Right lobe of liver (tissue), 6 donors: ENCODE measurements at regions of chr12 and their contacts with region 1.

Region 1: DNA sequence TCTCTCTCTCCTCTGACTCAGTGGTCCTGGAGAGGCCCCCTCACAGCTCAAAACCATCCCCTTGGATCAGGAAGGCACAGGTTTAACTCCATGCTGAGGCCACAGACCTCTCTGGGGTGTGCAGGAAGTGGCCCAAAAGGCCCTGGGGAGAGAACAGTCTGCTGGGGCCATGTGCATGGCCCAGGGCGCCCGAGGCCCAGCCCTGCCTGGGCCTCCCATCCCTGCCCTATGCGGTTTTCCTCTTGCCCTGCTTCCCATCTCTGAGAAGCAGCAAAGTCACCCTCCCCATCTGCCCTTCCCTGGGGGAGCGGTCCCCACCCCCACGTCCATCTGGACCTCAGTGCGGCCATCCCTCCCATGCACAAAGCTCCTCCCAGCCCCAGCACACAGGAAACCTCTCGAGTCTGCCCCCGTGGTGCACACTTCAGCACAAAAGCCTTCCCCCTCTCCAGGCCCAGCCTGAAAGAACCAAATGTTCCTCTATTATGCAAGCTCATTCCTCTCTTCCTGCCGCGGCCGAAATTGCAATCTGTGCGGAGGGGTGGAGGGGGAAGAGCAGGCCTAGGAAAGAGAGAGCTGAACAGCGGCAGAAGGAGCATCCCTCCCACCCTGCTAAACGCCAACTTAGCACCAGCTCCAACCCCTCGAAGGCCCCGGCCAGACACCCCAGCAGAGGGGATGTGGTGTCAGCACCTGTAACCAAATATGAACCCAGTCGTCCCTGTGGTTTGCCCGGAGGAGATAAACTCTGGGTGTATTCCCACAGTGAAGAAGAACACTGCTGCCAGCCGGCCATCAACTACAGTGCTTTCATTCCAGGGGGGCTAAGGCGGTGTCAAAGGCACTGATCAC is 108.5 kb downstream of the SCARB1 start:
- DNase-seq: peak; percentile 74 to 86 (median 81)
- ATAC-seq: peak; percentile 67 to 86 (median 84)
- H3K4me3 ChIP-seq: no peak overlapping the region
- H3K27ac ChIP-seq: peak overlapping the region; percentile 54 to 73 (median 58)
- H3K4me1 ChIP-seq: peaks cover 0 to 30% (median 16%) of the 10 kb centered on the region in 4 donors
- H3K27me3 ChIP-seq: no peaks in the 10 kb centered on the region
- CTCF ChIP-seq: no peak
- POLR2A ChIP-seq: peak; percentile 48

Region 2: GRCh38 chr12:124379938-124380754 is 375.0 kb before region 1 on chr12:
- intact Hi-C with region 1: loop called in 1 of 2 experiments (anchors 10 kb)
- DNase-seq: peak in 1 of 3 donors; percentile 46
- ATAC-seq: peak; percentile 36 to 49 (median 43)
- H3K4me3 ChIP-seq: no peak overlapping the region
- H3K27ac ChIP-seq: peak overlapping the region; percentile 36 to 77 (median 48)
- H3K4me1 ChIP-seq: peaks cover 0 to 23% (median 14%) of the 10 kb centered on the region in 4 donors
- H3K27me3 ChIP-seq: no peaks in the 10 kb centered on the region
- CTCF ChIP-seq: peak; percentile 20 to 25 (median 21)
- POLR2A ChIP-seq: no peak

Region 3: GRCh38 chr12:124795081-124795948 is 40.1 kb after region 1 on chr12:
- intact Hi-C with region 1: no loop called
- DNase-seq: no peak
- ATAC-seq: no peak
- H3K4me3 ChIP-seq: no peak overlapping the region
- H3K27ac ChIP-seq: no peak overlapping the region
- H3K4me1 ChIP-seq: peaks cover 0 to 4% (median 0%) of the 10 kb centered on the region in 4 donors
- H3K27me3 ChIP-seq: no peaks in the 10 kb centered on the region
- CTCF ChIP-seq: no peak
- POLR2A ChIP-seq: no peak